ENCODE measurements at regions of chr20 and their contacts with region 1.

Region 1: DNA sequence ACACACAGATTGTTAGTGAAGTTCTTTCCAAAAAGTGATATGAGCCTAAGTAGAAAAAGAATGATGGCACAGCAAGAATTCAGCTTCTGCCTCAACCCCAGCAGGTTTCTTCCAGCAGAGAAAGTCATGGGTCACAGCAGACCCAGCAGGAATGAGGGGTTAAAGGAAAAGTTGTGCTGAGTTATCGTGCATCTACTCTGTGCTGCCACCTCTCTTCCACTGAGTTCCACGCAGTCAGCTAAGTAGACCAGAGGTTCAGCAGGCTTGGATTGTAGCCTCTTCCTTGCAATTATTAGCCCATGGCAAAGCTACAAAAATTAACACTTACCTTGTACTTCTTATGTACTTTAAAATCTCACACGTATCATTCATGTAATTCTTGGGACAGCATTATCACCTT is 510.8 kb downstream of the PTPRT start:
- H3K4me3 Mint-ChIP-seq: no peak overlapping the region
- H3K27ac Mint-ChIP-seq: no peak overlapping the region
- H3K4me1 Mint-ChIP-seq: no peaks in the 10 kb centered on the region
- H3K27me3 Mint-ChIP-seq: no peaks in the 10 kb centered on the region

Region 2: GRCh38 chr20:42204203-42204942 is 474.5 kb before region 1 on chr20:
- intact Hi-C with region 1: loop called (anchors 10 kb)
- H3K4me3 Mint-ChIP-seq: no peak overlapping the region
- H3K27ac Mint-ChIP-seq: no peak overlapping the region
- H3K4me1 Mint-ChIP-seq: no peaks in the 10 kb centered on the region
- H3K27me3 Mint-ChIP-seq: no peaks in the 10 kb centered on the region

Region 3: GRCh38 chr20:42938441-42939205 is 259.7 kb after region 1 on chr20:
- intact Hi-C with region 1: no loop called
- H3K4me3 Mint-ChIP-seq: no peak overlapping the region
- H3K27ac Mint-ChIP-seq: no peak overlapping the region
- H3K4me1 Mint-ChIP-seq: no peaks in the 10 kb centered on the region
- H3K27me3 Mint-ChIP-seq: no peaks in the 10 kb centered on the region